Posterior vena cava (tissue), 2 donors: ENCODE measurements at regions of chr3 and their contacts with region 1.

Region 1: DNA sequence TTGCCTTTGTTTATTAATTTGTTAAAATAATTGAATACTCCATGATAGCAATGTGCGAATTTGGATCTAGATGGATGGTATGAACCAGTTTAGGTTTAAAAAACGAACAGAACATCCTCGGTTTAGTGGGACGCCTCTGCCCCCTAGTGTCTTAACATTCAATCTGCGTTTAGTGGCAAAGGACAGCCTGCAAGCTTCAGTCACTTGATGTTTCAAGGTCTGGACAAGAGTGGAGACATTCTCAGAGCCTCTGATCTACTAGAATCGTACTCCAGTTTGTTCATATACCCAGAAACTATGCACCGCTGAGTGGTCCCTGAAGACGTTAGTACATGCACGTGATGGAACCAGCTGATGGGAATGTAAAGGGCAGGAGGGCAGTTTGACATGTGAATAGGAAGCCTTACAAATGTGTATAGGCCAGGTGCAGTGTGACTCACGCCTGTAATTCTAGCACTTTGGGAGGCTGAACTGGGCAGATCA is 17.8 kb upstream of the ATP13A4 start:
- DNase-seq: no peak

Region 2: DNA sequence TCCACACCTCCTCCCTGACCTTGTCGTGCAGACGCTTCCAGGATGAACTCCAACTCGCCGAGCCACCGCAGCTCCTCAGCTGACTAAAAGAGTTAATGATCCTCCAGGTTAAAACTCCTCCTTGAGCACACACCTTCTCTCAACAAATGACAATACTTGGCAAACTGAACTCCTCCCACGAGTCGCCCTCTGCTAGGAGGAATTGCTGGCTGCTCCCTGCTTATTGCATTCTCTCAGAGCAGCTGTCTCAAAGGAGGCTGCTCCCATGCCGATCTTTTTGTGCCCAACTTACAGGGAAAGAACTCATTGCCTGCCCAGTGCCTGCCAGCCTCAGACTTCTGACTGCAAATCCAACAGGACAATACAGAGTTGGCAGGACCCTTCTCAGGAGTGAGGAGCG is 17.7 kb before region 1 on chr3 and contains the start of gene ATP13A4:
- intact Hi-C with region 1: loop called in 1 of 2 experiments (anchors 1 kb)
- DNase-seq: no peak
- total RNA-seq, gene ATP13A4: 0.14 to 0.33 TPM

Region 3: GRCh38 chr3:195063581-195064193 is 1491.2 kb after region 1 on chr3:
- intact Hi-C with region 1: no loop called
- DNase-seq: no peak